ENCODE measurements at regions of chr3 and their contacts with region 1.

Region 1: GRCh38 chr3:122392868-122393844 is 9.2 kb downstream of the FAM162A start:
- DNase-seq: peak in 1 of 6 donors; percentile 41
- ATAC-seq: peak; percentile 58 to 79 (median 78)
- H3K4me3 ChIP-seq: no peak overlapping the region
- H3K27ac ChIP-seq: peak overlapping the region; percentile 11 to 77 (median 50)
- H3K4me1 ChIP-seq: peaks cover 46 to 50% (median 48%) of the 10 kb centered on the region in 3 donors
- H3K27me3 ChIP-seq: no peaks in the 10 kb centered on the region
- CTCF ChIP-seq: peak in 3 of 4 donors; percentile 44 to 65 (median 50)

Region 2: DNA sequence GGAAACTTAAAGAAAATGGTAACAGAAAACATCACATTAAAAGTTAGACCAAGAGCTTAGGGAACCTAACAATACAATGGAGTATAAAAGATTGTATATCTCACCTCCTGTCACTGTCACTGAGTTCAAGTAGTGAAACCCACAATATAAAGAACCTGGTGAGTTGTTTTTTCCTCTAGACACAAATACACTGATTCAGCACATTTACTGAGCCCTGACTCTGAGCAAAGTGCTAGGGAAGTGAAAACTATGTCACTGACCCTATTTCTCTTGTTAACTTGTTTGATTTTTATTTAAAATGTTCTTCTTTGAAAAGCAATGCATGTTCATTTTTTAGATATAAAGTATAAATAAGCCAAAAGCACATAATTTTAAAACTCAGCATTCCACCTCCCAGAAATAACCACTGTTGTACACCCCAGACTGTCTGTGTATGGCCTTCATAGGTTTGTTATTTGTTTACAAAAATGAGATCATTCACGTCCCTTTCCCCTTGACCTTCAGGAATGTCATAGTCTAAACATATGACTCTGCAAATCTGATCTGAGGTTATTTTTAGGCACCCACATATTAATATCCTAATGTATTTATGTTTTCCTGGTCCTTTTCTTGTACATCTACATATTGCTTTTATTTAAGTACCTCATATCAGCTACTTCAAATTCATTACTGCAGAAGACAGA is 137.3 kb before region 1 on chr3:
- intact Hi-C with region 1: no loop called
- DNase-seq: no peak
- ATAC-seq: peak in 3 of 4 donors; percentile 46 to 74 (median 56)
- H3K4me3 ChIP-seq: no peak overlapping the region
- H3K27ac ChIP-seq: peak overlapping the region in 2 of 4 donors; percentile 17 to 24
- H3K4me1 ChIP-seq: peaks cover 0 to 4% (median 3%) of the 10 kb centered on the region in 3 donors
- H3K27me3 ChIP-seq: no peaks in the 10 kb centered on the region
- CTCF ChIP-seq: no peak

Region 3: DNA sequence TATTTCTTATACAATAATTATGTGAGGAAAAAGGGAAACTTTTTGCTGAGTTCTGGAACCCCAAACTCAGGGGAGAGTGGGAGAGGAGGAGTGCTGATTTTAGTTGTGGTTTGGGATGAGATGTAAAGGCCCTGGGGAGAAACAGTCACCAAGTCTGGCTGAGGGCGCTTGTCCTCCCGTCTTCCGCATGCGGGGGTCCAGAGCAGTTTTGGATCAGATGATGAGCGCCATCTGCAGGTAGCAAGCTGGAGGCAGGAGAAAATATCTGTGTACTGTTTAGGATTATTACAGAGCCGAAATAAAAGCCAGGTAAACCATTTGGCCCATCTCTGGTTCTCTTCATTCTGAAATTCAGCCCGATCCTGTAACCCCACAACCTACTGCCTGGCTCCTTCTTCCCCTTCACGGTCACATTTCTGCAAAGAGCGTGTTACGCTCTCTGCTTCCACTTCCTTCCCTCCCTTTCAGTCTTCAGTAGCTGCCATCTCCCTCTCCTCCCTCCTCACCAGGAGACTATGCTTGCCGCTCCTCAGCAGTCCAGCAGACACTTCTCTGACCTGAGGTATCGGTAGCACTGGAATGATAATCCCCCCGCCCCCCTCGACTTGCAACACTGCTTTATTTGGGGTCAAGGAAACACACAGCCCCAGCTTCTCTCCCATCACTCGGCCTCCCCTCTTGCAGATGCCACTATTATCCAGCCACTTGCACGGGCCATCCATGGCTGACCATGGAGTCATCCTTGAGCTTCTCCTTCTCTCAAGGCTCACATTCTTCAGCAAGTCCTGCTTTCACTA is 286.1 kb after region 1 on chr3:
- intact Hi-C with region 1: loop called in 1 of 3 experiments (anchors 10 kb)
- DNase-seq: peak; percentile 70 to 81 (median 78)
- ATAC-seq: peak; percentile 67 to 86 (median 76)
- H3K4me3 ChIP-seq: peak overlapping the region in 2 of 4 donors; percentile 58 to 80
- H3K27ac ChIP-seq: peak overlapping the region; percentile 74 to 96 (median 88)
- H3K4me1 ChIP-seq: peaks cover 0 to 16% (median 0%) of the 10 kb centered on the region in 3 donors
- H3K27me3 ChIP-seq: no peaks in the 10 kb centered on the region
- CTCF ChIP-seq: peak; percentile 36 to 65 (median 58)